ENCODE measurements at regions of chr19 and their contacts with region 1.

Region 1: GRCh38 chr19:5340637-5341447 is at the start of gene PTPRS:
- DNase-seq: peak; percentile 67
- H3K4me3 ChIP-seq: peak within 1 kb of the TSS; percentile 25 to 49 (median 42)
- H3K27ac ChIP-seq: no peak within 1 kb of the TSS
- H3K4me1 ChIP-seq: peaks cover 6% of the 10 kb centered on the region
- H3K27me3 ChIP-seq: peaks cover 14 to 25% of the 10 kb centered on the region in 2 experiments
- CTCF ChIP-seq: no peak
- POLR2A ChIP-seq: no peak
- total RNA-seq, gene PTPRS: 12.5 and 16.1 TPM in 2 replicates

Region 2: GRCh38 chr19:5250127-5250659 is 90.6 kb before region 1 on chr19:
- CTCF ChIA-PET with region 1: no interaction called
- POLR2A ChIA-PET with region 1: no interaction called
- dilution Hi-C with region 1: loop called (anchors 10 kb)
- intact Hi-C with region 1: no loop called
- DNase-seq: no peak
- H3K4me3 ChIP-seq: no peak overlapping the region
- H3K27ac ChIP-seq: no peak overlapping the region
- H3K4me1 ChIP-seq: no peaks in the 10 kb centered on the region
- H3K27me3 ChIP-seq: no peaks in the 10 kb centered on the region
- CTCF ChIP-seq: no peak
- POLR2A ChIP-seq: no peak

Region 3: GRCh38 chr19:5308471-5309437 is 32.1 kb before region 1 on chr19:
- CTCF ChIA-PET with region 1: no interaction called
- POLR2A ChIA-PET with region 1: no interaction called
- dilution Hi-C with region 1: no loop called
- intact Hi-C with region 1: no loop called
- DNase-seq: peak; percentile 69
- H3K4me3 ChIP-seq: peak overlapping the region in 1 of 3 experiments; percentile 14
- H3K27ac ChIP-seq: peak overlapping the region; percentile 65
- H3K4me1 ChIP-seq: no peaks in the 10 kb centered on the region
- H3K27me3 ChIP-seq: no peaks in the 10 kb centered on the region
- CTCF ChIP-seq: no peak
- POLR2A ChIP-seq: peak; percentile 99

Region 4: DNA sequence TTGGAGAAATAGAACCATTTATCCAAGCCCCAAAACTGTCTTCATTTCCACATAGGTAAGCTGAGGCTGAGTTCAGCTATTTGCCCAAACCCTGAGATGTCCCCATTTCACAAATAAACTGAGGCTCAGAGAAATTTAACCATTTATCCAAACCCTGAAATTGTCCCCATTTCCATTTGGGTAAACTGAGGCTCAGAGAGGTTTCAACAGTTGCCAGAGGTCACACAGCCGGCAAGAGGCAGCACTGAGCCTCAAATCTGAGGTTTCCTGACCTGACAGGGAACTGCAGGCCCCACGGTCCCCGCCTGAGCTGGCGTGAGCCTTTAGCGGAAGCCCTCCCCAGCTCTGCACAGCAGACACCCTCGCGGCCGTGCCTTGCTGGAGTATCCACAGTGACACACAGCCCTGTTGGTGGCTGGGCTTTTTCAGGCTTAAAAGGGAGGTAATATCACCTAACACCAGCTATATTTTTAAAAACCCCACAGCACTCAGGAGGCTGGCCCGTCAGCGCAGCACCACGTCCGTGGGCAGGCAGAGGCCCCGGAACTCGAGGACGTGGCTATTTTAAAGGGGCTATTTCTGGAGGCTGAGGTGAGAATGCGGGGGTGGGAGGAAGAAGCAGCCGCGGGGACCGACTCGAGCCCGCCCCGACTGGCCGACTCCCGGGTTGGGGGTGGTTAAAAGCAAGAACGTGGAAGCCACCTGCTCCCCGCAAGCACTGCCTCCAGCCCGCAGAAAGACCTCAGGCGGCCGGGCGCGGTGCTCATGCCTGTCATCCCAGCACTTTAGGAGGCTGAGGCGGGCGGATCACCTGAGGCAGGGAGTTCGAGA is 18.8 kb before region 1 on chr19:
- CTCF ChIA-PET with region 1: no interaction called
- POLR2A ChIA-PET with region 1: no interaction called
- dilution Hi-C with region 1: no loop called
- intact Hi-C with region 1: no loop called
- DNase-seq: no peak
- H3K4me3 ChIP-seq: no peak overlapping the region
- H3K27ac ChIP-seq: no peak overlapping the region
- H3K4me1 ChIP-seq: no peaks in the 10 kb centered on the region
- H3K27me3 ChIP-seq: no peaks in the 10 kb centered on the region
- CTCF ChIP-seq: no peak
- POLR2A ChIP-seq: no peak

Measured in endothelial cell of umbilical vein (primary cell).